Heart left ventricle (tissue), 16 donors: ENCODE measurements at regions of chr20 and their contacts with region 1.

Region 1: DNA sequence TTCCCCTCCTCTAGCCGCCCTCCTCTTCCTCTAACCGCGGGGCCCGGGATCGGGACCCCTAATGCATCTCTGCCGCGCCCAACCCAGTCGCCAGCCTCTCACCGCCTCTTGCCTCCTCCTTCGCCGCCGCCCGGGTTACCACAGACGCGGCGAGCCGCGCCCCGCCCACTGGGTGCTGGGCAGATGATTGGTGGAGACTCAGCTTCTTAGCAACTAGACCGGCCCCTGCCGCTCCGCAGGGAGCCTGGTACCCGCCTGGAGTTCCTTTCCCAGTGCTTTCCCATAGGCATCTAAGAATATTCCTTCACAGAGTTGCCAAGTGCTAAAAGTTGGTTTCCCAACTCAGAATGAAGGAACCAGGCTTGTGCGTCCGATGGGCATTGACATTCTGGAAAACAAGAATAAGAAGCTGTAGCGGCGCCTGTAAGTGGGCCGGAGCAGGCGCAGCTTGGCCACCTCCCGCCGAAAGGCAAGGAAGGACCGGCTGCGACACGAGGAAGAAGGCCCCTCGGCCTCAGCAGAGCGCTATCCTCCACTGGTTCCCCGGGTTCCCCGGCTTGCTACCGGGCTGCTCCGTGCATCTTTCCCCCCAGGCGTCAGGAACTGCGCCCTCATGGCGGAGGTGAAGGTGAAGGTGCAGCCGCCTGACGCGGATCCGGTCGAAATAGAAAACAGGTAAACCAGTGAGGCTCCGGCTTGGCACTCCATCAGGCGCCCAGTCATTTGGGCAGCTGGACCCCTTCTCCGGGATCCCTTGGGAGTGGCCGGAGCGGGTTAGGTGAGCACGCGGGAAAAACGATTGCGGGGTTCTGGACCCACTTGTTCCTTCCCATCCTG is at the starts of genes DZANK1 and POLR3F:
- DNase-seq: peak; percentile 95 to 98 (median 97)
- ATAC-seq: peak; percentile 99 to 100 (median 100)
- H3K4me3 ChIP-seq: peak within 1 kb of the TSS; percentile 74 to 99 (median 82)
- H3K27ac ChIP-seq: peak within 1 kb of the TSS; percentile 73 to 95 (median 88)
- H3K4me1 ChIP-seq: peaks cover 0 to 22% (median 14%) of the 10 kb centered on the region in 12 donors
- H3K27me3 ChIP-seq: no peaks in the 10 kb centered on the region
- CTCF ChIP-seq: no peak
- POLR2A ChIP-seq: no peak
- total RNA-seq, gene DZANK1: 0.46 to 2.0 (median 0.85) TPM in 8 of 9 donors, not detected in the other
- total RNA-seq, gene POLR3F: 5.9 to 12.0 (median 8.0) TPM

Region 2: DNA sequence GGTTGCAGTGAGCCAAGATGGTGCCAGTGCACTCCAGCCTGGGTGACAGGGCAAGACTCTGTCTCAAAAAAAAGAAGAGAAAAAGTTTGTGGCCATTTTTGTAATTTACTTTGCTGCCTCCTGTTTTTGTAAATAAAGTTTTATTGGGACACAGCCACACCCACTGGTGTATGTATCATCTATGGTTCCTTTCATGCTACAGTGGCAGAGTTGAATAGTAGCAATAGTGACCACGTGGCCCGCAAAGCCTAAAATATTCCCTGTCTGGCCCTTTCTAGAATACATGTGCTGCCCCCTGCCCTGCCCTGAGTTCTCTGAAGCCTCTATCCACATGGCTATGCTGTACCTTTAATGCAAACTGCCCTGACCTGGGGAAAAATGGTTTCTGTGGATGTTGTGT is 254.1 kb before region 1 on chr20:
- intact Hi-C with region 1: no loop called
- DNase-seq: no peak
- ATAC-seq: no peak
- H3K4me3 ChIP-seq: no peak overlapping the region
- H3K27ac ChIP-seq: no peak overlapping the region
- H3K4me1 ChIP-seq: no peaks in the 10 kb centered on the region
- H3K27me3 ChIP-seq: no peaks in the 10 kb centered on the region
- CTCF ChIP-seq: no peak
- POLR2A ChIP-seq: no peak

Region 3: DNA sequence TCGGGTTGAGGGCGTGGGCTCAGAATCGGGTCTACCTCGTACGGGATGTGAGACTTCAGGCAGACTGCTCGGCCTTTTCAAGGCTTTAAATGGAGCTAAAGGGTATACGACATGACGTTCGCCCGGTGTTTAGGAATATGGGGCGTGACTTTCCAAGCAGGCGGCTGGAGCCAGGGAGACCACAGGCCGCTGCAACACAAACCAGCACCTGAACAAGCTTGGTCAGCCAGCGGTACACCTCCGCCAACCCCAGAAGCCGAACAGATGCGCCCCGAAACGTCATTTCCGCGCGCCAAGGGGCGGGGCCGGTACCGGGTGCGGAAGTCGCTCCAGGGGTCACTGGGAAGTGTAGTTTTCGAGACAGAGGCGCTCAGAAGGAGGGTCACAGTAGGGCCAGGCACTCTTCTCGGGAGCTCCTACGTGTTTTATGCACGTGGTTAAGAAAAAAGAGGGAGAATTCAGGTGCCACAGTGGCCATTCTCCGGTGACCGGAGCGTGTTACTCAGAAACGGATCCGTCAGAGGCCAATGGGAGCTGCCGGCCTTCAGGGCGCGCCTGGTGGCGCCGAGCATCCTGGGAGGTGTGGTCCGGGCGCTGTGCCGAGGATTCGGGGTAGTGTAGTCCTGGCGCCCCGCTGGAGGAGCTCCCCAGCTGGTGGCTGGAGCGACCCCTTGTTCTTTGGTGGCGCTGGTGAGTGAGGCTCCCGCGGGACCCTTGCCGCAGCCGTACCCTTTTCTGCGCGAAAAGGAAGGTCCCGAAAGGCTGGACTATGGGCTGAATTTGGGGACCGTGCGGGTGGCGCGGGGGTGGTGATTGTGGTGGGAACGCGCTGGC is 179.0 kb before region 1 on chr20 and contains the start of gene ZNF133:
- intact Hi-C with region 1: loop called in 5 of 10 experiments (anchors 2 to 10 kb)
- DNase-seq: peak; percentile 96 to 97 (median 97)
- ATAC-seq: peak; percentile 99
- H3K4me3 ChIP-seq: peak within 1 kb of the TSS; percentile 62 to 99 (median 78)
- H3K27ac ChIP-seq: peak within 1 kb of the TSS; percentile 80 to 100 (median 95)
- H3K4me1 ChIP-seq: peaks cover 0 to 21% (median 12%) of the 10 kb centered on the region in 12 donors
- H3K27me3 ChIP-seq: peaks cover 0 to 9% (median 0%) of the 10 kb centered on the region in 9 donors
- CTCF ChIP-seq: peak in 3 of 12 donors; percentile 15 to 24 (median 23)
- POLR2A ChIP-seq: peak in 1 of 2 donors; percentile 75
- total RNA-seq, gene ZNF133: 4.0 to 9.8 (median 6.3) TPM

Region 4: GRCh38 chr20:18299364-18299763 is 167.7 kb before region 1 on chr20:
- intact Hi-C with region 1: loop called in 2 of 10 experiments (anchors 10 kb)
- DNase-seq: no peak
- ATAC-seq: no peak
- H3K4me3 ChIP-seq: no peak overlapping the region
- H3K27ac ChIP-seq: no peak overlapping the region
- H3K4me1 ChIP-seq: no peaks in the 10 kb centered on the region
- H3K27me3 ChIP-seq: no peaks in the 10 kb centered on the region
- CTCF ChIP-seq: no peak
- POLR2A ChIP-seq: no peak

Region 5: GRCh38 chr20:18412221-18412901 is 54.8 kb before region 1 on chr20:
- intact Hi-C with region 1: loop called in 2 of 10 experiments (anchors 2 to 10 kb)
- DNase-seq: no peak
- ATAC-seq: no peak
- H3K4me3 ChIP-seq: no peak overlapping the region
- H3K27ac ChIP-seq: peak overlapping the region in 1 of 12 donors; percentile 52
- H3K4me1 ChIP-seq: peaks cover 0 to 4% (median 0%) of the 10 kb centered on the region in 12 donors
- H3K27me3 ChIP-seq: no peaks in the 10 kb centered on the region
- CTCF ChIP-seq: no peak
- POLR2A ChIP-seq: no peak

Region 6: DNA sequence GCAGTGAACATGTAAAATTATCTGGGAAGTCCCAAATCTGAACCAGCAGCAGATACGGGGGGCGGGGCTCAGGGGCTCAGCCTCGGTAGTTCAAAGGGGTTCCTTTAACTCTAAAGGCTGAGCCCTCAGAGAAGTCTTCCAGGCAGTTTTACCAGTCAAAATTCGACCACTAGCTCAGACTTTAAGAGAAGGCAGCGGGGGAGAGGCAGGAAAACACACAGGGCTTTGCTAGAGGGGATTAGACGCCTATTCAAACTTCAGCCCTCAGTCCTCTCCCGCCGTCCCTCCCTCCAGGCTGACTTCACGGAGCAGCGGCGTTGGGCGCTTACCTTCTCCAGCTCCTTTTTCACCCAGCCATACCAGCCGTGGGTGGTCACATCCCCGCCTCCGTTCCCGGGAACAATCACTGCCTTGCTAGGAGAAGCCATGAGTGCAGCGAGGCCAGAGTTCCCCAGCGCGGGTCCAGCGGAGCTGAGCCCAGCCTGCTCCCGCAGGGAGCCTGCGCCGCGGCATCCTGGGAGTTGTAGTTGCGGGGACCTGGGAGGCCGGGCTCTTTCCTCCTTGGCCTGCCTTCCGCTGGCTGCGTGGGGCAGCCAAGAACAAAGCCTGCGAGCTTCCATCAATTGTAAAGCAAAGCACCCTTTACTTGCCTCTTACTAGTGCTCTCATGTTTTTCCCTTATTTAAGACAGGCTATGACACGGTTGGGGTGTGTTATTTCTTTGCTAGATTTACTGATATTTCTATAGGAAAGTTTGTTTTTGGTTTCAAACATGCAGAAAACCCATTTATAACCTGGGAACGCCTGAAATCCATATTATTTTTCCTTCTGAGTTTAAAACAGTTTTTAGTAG is 29.9 kb after region 1 on chr20 and contains the start of gene RBBP9:
- intact Hi-C with region 1: loop called in 2 of 10 experiments (anchors 2 kb)
- DNase-seq: peak; percentile 87 to 94 (median 90)
- ATAC-seq: peak; percentile 99 to 100 (median 100)
- H3K4me3 ChIP-seq: peak within 1 kb of the TSS; percentile 66 to 90 (median 76)
- H3K27ac ChIP-seq: peak within 1 kb of the TSS in 11 of 12 donors; percentile 31 to 76 (median 65)
- H3K4me1 ChIP-seq: peaks cover 3 to 16% (median 13%) of the 10 kb centered on the region in 12 donors
- H3K27me3 ChIP-seq: no peaks in the 10 kb centered on the region
- CTCF ChIP-seq: no peak
- POLR2A ChIP-seq: peak in 1 of 2 donors; percentile 8
- total RNA-seq, gene RBBP9: 4.6 to 9.1 (median 6.2) TPM

Region 7: DNA sequence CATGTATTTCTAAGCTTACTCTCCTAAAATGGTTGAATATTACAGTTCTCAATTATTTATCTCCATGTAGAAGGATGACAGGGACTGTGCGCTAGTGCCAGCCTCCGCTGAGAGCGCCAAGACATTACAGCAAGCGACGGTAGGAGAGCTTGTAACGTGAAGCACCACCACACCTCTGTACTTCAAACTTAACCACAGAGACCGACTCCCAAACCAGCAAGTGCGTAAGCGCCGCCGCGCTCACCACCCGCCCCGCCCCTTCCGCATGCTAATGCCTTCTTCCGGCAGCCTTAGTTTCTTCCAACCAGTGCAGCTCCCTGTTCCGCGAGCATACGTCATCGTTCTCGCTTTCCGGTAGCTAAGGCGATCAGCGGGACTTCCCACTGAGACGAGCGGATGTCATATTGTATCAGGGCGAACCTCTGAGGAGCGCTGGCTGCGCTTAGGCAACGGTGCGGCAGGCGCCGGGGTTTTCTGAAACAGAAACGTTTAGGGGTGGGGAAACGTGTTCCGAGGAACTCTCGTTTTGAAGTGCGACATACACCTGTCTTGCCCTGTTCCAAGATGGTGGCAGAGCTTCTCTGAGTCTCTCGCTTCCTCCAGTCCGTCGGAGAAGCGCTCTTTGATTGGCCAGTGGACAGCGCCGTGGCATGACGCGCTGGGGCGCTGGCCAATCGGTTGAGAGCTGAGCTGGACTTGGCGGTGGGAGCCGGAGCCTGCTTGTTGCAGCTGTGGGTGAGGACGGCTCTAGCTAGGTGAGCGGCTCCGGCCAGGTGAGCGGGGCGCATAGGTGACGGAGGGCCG is 40.3 kb after region 1 on chr20 and contains the start of gene SEC23B:
- intact Hi-C with region 1: loop called in 3 of 10 experiments (anchors 1 to 2 kb)
- DNase-seq: peak; percentile 97 to 99 (median 97)
- ATAC-seq: peak; percentile 99
- H3K4me3 ChIP-seq: peak within 1 kb of the TSS; percentile 68 to 96 (median 77)
- H3K27ac ChIP-seq: peak within 1 kb of the TSS; percentile 91 to 99 (median 95)
- H3K4me1 ChIP-seq: peaks cover 0 to 44% (median 10%) of the 10 kb centered on the region in 12 donors
- H3K27me3 ChIP-seq: peaks cover 0 to 23% (median 0%) of the 10 kb centered on the region in 9 donors
- CTCF ChIP-seq: no peak
- POLR2A ChIP-seq: peak; percentile 11 to 68
- total RNA-seq, gene SEC23B: 8.5 to 29.2 (median 11.9) TPM

Region 8: DNA sequence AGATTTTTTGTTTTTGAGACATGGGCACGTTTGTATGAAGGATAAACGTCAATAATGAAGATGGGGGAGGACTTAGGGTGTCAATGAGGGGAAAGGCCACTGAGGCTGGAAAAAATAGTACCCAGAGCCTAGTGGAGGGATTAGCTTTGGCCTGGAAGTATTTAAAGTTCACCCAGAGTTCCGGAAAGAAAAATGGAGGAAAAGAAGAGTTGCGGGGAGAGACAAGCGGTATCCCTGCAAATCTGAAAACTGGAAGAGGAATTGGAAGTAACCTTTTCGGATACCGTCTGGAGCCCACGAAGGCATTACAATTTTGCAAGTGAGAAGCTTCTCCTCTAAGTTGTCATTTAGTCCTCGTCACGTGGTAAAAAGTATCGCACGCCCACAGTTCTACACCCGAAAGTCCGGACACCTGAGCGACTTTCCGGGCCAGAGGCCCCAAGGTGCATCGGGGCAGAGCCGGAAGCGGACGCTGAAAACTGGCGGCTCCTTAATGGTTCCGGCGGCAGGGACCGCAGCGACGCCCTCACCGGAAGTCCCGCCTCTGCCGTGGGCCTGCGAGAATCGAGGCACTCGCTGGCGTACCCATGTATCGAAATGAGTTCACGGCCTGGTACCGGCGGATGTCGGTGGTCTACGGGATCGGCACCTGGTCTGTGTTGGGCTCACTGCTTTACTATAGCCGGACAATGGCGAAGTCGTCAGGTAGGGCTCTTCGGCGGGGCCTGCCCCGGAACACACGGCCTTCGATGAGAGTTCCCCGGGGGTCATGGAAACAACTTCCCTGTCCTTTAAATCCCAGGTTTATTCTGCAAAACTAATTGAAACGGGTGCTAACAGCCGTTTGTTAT is 100.0 kb after region 1 on chr20 and contains the start of gene SMIM26:
- intact Hi-C with region 1: loop called in 1 of 10 experiments (anchors 5 kb)
- DNase-seq: peak; percentile 92 to 97 (median 96)
- ATAC-seq: peak; percentile 98 to 100 (median 100)
- H3K4me3 ChIP-seq: peak within 1 kb of the TSS; percentile 64 to 83 (median 74)
- H3K27ac ChIP-seq: peak within 1 kb of the TSS; percentile 63 to 93 (median 83)
- H3K4me1 ChIP-seq: peaks cover 0 to 31% (median 6%) of the 10 kb centered on the region in 12 donors
- H3K27me3 ChIP-seq: no peaks in the 10 kb centered on the region
- CTCF ChIP-seq: no peak
- POLR2A ChIP-seq: peak in 1 of 2 donors; percentile 60
- total RNA-seq, gene SMIM26: 80.1 to 224 (median 103) TPM